PC-9 (cell line): ENCODE measurements at regions of chr4 and their contacts with region 1.

Region 1: DNA sequence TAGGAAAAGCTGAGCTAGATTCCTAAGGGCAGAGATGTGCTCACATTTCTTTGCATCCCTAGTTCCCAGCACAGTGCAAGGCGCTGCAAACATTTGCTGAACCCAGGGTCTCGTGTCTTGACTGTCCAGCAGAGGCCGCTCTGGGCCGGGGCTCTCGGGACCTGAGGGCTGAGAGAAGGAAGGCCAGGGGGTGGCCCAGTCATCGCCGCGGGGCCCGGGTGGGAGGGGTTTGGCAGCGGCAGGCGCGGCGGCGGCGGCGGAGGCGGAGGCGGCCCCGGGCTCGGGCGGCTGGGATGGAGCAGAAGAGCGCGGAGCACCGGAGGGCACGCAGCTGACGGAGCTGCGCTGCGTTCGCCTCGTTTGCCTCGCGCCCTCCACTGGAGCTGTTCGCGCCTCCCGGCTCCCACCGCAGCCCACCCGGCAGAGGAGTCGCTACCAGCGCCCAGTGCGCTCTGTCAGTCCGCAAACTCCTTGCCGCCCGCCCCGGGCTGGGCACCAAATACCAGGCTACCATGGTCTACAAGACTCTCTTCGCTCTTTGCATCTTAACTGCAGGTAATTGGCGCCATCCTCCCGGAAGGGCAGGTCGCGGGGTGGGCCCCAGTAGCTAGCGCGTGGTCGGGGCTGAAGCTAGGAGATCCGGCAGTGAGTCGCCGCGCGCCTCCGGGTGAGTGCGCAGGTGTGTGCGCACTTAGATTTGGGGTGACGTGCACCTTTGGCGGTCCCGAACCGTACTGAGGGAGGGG is at the start of gene PARM1:
- DNase-seq: peak; percentile 58 to 78
- H3K4me3 ChIP-seq: peak within 1 kb of the TSS; percentile 77
- H3K27ac ChIP-seq: no peak within 1 kb of the TSS
- H3K4me1 ChIP-seq: no peaks in the 10 kb centered on the region
- H3K27me3 ChIP-seq: no peaks in the 10 kb centered on the region
- CTCF ChIP-seq: peak; percentile 75
- total RNA-seq, gene PARM1: 0.44 and 0.70 TPM in 2 replicates

Region 2: GRCh38 chr4:75180790-75181776 is 248.1 kb after region 1 on chr4:
- CTCF ChIA-PET with region 1: no interaction called
- POLR2A ChIA-PET with region 1: no interaction called
- intact Hi-C with region 1: loop called (anchors 10 kb)
- DNase-seq: peak; percentile 64 to 75
- H3K4me3 ChIP-seq: peak overlapping the region; percentile 49
- H3K27ac ChIP-seq: peak overlapping the region; percentile 93
- H3K4me1 ChIP-seq: peaks cover 28% of the 10 kb centered on the region
- H3K27me3 ChIP-seq: no peaks in the 10 kb centered on the region
- CTCF ChIP-seq: no peak

Region 3: GRCh38 chr4:75289914-75290582 is 357.1 kb after region 1 on chr4:
- CTCF ChIA-PET with region 1: no interaction called
- POLR2A ChIA-PET with region 1: no interaction called
- intact Hi-C with region 1: loop called (anchors 5 kb)
- DNase-seq: peak in 1 of 2 experiments; percentile 4
- H3K4me3 ChIP-seq: no peak overlapping the region
- H3K27ac ChIP-seq: no peak overlapping the region
- H3K4me1 ChIP-seq: no peaks in the 10 kb centered on the region
- H3K27me3 ChIP-seq: no peaks in the 10 kb centered on the region
- CTCF ChIP-seq: peak; percentile 61

Region 4: GRCh38 chr4:75477201-75477600 is 544.2 kb after region 1 on chr4:
- CTCF ChIA-PET with region 1: no interaction called
- POLR2A ChIA-PET with region 1: no interaction called
- intact Hi-C with region 1: loop called (anchors 2 kb)
- DNase-seq: no peak
- H3K4me3 ChIP-seq: no peak overlapping the region
- H3K27ac ChIP-seq: no peak overlapping the region
- H3K4me1 ChIP-seq: no peaks in the 10 kb centered on the region
- H3K27me3 ChIP-seq: no peaks in the 10 kb centered on the region
- CTCF ChIP-seq: no peak